PC-3 (cell line): ENCODE measurements at regions of chr18 and their contacts with region 1.

Region 1: GRCh38 chr18:26458526-26459232 is 89.7 kb downstream of the KCTD1 start:
- DNase-seq: peak; percentile 20
- ATAC-seq: peak; percentile 18; the same call in 1 of the 2 replicates
- H3K4me3 ChIP-seq: no peak overlapping the region
- H3K27ac ChIP-seq: 0 out of 2 replicates have a peak overlapping the region, but pooled peaks have one; percentile 6
- H3K4me1 ChIP-seq: peaks cover 15% of the 10 kb centered on the region
- H3K27me3 ChIP-seq: no peaks in the 10 kb centered on the region
- CTCF ChIP-seq: no peak

Region 2: GRCh38 chr18:26432651-26433424 is 25.8 kb before region 1 on chr18:
- CTCF ChIA-PET with region 1: no interaction called
- POLR2A ChIA-PET with region 1: no interaction called
- intact Hi-C with region 1: no loop called
- DNase-seq: no peak
- ATAC-seq: no peak
- H3K4me3 ChIP-seq: no peak overlapping the region
- H3K27ac ChIP-seq: no peak overlapping the region
- H3K4me1 ChIP-seq: peaks cover 25% of the 10 kb centered on the region
- H3K27me3 ChIP-seq: no peaks in the 10 kb centered on the region
- CTCF ChIP-seq: no peak

Region 3: GRCh38 chr18:26574958-26575864 is 116.5 kb after region 1 on chr18:
- CTCF ChIA-PET with region 1: no interaction called
- POLR2A ChIA-PET with region 1: no interaction called
- intact Hi-C with region 1: loop called (anchors 1 kb)
- DNase-seq: peak; percentile 56
- ATAC-seq: peak; percentile 40
- H3K4me3 ChIP-seq: peak overlapping the region; percentile 63
- H3K27ac ChIP-seq: peak overlapping the region; percentile 73
- H3K4me1 ChIP-seq: peaks cover 27% of the 10 kb centered on the region
- H3K27me3 ChIP-seq: no peaks in the 10 kb centered on the region
- CTCF ChIP-seq: no peak